ENCODE measurements at regions of chr17 and their contacts with region 1.

Region 1: GRCh38 chr17:20908373-20909273 is 134.2 kb downstream of the USP22 start:
- DNase-seq: peak; percentile 78 to 85
- ATAC-seq: peak; percentile 97 to 99 (median 99)
- H3K4me3 ChIP-seq: peak overlapping the region; percentile 54
- H3K4me3 Mint-ChIP-seq: peak overlapping the region; percentile 87
- H3K27ac ChIP-seq: peak overlapping the region; percentile 49
- H3K27ac Mint-ChIP-seq: peak overlapping the region; percentile 42 to 67
- H3K4me1 ChIP-seq: peaks cover 11% of the 10 kb centered on the region
- H3K4me1 Mint-ChIP-seq: peaks cover 0 to 7% of the 10 kb centered on the region in 2 donors
- H3K27me3 ChIP-seq: no peaks in the 10 kb centered on the region
- H3K27me3 Mint-ChIP-seq: peaks cover 4 to 28% of the 10 kb centered on the region in 2 donors
- CTCF ChIP-seq: peak; percentile 47

Region 2: DNA sequence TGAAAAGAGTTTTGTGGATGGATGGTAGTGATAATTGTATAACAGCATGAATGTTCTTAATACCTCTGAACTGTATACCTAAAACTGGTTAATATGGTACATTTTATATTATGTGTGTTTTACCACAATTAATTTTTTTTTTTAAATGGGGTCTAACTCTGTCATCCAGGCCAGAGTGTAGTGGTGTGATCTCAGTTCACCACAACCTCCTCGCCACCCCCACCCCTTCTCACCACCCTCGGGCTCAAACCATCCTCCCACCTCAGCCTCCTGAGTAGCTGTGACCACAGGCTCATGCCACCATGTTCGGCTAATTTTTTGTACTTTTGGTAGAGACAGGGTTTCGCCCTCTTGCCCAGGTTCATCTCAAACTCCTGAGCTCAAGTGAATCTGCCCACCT is 205.9 kb before region 1 on chr17:
- intact Hi-C with region 1: loop called (anchors 5 kb)
- DNase-seq: peak; percentile 42 to 52
- ATAC-seq: peak; percentile 43 to 73 (median 65)
- H3K4me3 ChIP-seq: no peak overlapping the region
- H3K4me3 Mint-ChIP-seq: peak overlapping the region; percentile 83
- H3K27ac ChIP-seq: peak overlapping the region; percentile 45
- H3K27ac Mint-ChIP-seq: peak overlapping the region; percentile 93 to 98
- H3K4me1 ChIP-seq: peaks cover 62% of the 10 kb centered on the region
- H3K4me1 Mint-ChIP-seq: peaks cover 71 to 73% of the 10 kb centered on the region in 2 donors
- H3K27me3 ChIP-seq: no peaks in the 10 kb centered on the region
- H3K27me3 Mint-ChIP-seq: no peaks in the 10 kb centered on the region
- CTCF ChIP-seq: no peak

Measured in natural killer cell (primary cell).